ENCODE measurements at regions of chr11 and their contacts with region 1.

Region 1: DNA sequence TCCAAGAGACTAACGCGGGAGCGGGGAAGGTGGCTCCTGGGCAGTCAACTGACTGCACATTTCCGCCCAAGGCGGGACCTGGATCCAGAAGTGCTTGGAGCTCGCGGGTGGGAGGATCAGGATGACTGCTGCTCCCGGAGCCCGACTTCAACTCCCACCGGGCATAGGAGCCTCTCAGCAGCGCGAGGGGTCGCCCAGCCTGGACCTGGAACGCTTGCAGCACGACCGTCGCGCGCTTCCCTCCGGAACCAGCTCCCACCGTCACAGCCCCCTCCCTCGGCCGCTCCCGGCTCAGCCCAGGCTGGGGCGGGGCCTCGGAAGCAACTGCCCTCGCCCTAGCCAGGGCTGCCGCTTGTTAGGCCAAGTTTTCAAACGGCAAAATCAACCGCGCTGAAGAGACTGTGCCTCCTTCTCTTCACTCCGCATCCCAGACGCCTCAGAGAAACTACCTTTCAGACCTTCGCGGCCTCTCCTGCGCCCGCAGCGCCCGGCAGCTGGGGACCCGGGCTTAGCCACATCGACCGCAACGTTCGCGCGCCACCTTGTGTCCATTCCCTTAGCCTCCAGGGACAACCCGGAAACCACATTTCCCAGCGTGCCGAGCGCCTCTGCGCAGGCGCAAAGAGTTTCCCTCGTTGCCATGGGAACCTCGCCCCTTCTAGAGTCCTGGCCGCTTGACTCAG is 14.0 kb downstream of the SSH3 start:
- DNase-seq: peak; percentile 98 to 99
- ATAC-seq: peak; percentile 88 to 94 (median 90)
- H3K4me3 ChIP-seq: peak overlapping the region; percentile 61
- H3K4me3 Mint-ChIP-seq: peak overlapping the region; percentile 100
- H3K27ac ChIP-seq: peak overlapping the region; percentile 68
- H3K27ac Mint-ChIP-seq: peak overlapping the region; percentile 94 to 97
- H3K4me1 ChIP-seq: peaks cover 32% of the 10 kb centered on the region
- H3K4me1 Mint-ChIP-seq: peaks cover 25 to 33% of the 10 kb centered on the region in 2 donors
- H3K27me3 ChIP-seq: no peaks in the 10 kb centered on the region
- H3K27me3 Mint-ChIP-seq: peaks cover 0 to 11% of the 10 kb centered on the region in 2 donors
- CTCF ChIP-seq: peak; percentile 78

Region 2: DNA sequence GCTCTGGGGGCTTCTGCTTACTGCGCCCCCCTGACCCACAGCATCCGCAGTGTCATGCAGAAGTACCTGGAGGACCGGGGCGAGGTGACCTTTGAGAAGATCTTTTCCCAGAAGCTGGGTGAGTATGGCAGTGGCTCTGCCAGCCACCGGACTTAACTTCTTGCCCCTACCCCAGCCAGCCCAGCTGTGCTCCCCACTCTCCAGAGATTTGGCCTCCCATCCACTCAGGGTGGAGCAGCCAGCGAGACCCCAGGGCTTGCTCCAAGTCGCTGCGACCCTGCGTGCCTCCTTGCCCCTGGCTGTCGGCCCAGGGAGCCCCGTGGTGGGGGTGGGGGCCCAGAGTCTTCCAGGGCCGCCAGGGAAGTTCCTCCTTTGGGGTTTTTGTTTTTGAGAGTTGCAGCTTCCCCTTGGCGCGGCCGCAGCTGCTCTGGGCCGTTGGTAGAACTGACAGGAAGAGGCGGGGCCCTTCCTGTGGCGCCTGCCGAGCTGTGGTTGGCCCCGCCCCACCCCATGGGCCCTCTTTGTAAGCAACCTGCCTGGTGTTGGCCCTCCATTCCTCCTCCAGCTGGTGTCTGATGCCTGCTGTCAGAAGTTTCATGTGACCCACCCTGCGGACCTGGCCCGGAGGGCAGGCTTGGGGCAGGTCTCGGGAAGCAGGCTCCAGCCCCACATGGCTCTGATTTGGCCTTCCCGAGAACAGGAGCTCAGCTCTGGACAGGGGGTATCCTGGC is 40.0 kb before region 1 on chr11:
- intact Hi-C with region 1: loop called (anchors 1 kb)
- DNase-seq: peak; percentile 84 to 97
- ATAC-seq: peak; percentile 90 to 95 (median 91)
- H3K4me3 ChIP-seq: peak overlapping the region; percentile 37
- H3K4me3 Mint-ChIP-seq: peak overlapping the region; percentile 80
- H3K27ac ChIP-seq: peak overlapping the region; percentile 95
- H3K27ac Mint-ChIP-seq: peak overlapping the region; percentile 96 to 97
- H3K4me1 ChIP-seq: peaks cover 100% of the 10 kb centered on the region
- H3K4me1 Mint-ChIP-seq: peaks cover 58 to 65% of the 10 kb centered on the region in 2 donors
- H3K27me3 ChIP-seq: no peaks in the 10 kb centered on the region
- H3K27me3 Mint-ChIP-seq: no peaks in the 10 kb centered on the region
- CTCF ChIP-seq: no peak

Region 3: GRCh38 chr11:67332081-67332691 is 14.8 kb after region 1 on chr11:
- intact Hi-C with region 1: loop called (anchors 1 kb)
- DNase-seq: no peak
- ATAC-seq: no peak
- H3K4me3 ChIP-seq: no peak overlapping the region
- H3K4me3 Mint-ChIP-seq: no peak overlapping the region
- H3K27ac ChIP-seq: no peak overlapping the region
- H3K27ac Mint-ChIP-seq: no peak overlapping the region
- H3K4me1 ChIP-seq: no peaks in the 10 kb centered on the region
- H3K4me1 Mint-ChIP-seq: no peaks in the 10 kb centered on the region
- H3K27me3 ChIP-seq: no peaks in the 10 kb centered on the region
- H3K27me3 Mint-ChIP-seq: no peaks in the 10 kb centered on the region
- CTCF ChIP-seq: no peak

Region 4: DNA sequence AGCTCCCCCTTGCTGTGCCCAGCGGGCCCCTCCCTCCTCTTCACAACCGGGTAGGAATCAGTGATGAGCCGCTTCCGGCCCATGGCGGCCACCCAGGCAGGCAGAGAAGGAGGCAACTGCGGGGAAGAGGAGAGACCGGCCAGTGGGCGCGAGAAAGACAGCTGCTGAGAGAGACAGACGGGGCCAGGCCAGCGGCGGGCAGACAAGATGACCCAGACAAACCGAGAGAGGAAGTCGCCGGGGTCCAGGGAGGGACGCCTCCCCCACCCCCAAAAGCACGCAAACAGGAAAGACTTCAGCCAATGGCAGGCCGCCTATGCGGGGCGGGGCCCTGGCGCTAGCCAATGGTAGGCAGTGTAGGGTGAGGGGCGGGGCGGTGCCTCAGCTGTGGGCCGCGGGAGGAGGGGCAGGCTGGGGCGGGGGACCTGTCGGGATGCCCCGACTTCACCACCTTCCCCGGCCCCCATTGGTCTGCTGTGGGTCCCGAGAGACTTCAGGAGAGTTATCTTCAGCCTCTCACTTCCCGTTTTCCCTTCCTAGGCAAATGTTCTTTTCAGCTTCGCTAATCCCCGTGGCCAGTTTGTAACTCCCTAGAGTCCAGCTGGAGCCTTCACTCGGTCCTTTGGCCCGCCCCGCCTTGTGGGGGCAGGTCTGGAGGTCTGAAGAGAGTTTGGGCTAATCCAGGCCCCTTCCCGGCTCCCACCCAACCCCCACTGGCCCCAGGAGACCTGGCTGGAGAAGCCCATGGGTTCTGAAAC is 36.1 kb after region 1 on chr11 and contains the start of gene POLD4:
- intact Hi-C with region 1: loop called (anchors 1 kb)
- DNase-seq: peak; percentile 95 to 96
- ATAC-seq: peak; percentile 82 to 94 (median 89)
- H3K4me3 ChIP-seq: peak within 1 kb of the TSS; percentile 73
- H3K4me3 Mint-ChIP-seq: peak within 1 kb of the TSS; percentile 97
- H3K27ac ChIP-seq: peak within 1 kb of the TSS; percentile 97
- H3K27ac Mint-ChIP-seq: peak within 1 kb of the TSS; percentile 96 to 99
- H3K4me1 ChIP-seq: peaks cover 78% of the 10 kb centered on the region
- H3K4me1 Mint-ChIP-seq: peaks cover 23 to 41% of the 10 kb centered on the region in 2 donors
- H3K27me3 ChIP-seq: no peaks in the 10 kb centered on the region
- H3K27me3 Mint-ChIP-seq: peaks cover 0 to 4% of the 10 kb centered on the region in 2 donors
- CTCF ChIP-seq: no peak
- total RNA-seq, gene POLD4: 45.8 to 63.7 (median 60.5) TPM

Region 5: DNA sequence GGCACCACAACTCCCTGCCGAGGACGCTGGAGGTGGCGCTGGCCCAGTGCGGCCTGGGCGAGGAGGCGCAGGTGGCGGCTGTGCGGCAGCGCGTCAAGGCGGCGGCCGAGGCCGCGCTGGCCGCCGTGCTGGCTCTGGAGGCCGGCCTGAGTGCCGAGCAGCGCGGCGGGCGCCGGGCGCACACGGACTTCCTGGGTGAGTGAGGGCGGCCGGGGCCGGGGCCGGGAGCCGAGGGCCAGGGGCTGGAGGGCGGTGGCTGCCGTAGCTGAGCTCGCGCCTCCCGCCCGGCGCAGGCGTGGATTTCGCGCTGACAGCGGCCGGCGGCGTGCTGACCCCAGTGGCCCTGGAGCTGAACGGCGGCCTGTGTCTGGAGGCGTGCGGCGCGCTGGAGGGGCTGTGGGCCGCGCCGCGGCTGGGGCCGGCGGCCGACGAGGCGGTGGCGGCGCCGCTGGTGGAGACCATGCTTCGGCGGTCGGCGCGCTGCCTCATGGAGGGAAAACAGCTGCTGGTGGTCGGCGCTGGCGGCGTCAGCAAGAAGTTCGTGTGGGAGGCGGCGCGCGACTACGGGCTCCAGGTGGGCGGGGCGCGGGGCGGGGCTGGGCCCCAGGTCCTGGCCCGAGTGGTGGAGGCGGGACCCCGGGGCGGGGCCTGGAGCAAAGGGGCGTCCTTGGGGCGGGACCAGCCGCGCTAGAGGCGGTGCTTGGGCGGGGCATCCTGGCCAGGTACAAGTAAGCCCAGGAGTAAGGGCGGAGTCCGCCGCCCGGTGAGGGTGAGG is 103.5 kb after region 1 on chr11:
- intact Hi-C with region 1: no loop called
- DNase-seq: peak; percentile 97 to 98
- ATAC-seq: peak; percentile 92 to 99 (median 95)
- H3K4me3 ChIP-seq: peak overlapping the region; percentile 38
- H3K4me3 Mint-ChIP-seq: peak overlapping the region; percentile 79
- H3K27ac ChIP-seq: peak overlapping the region; percentile 79
- H3K27ac Mint-ChIP-seq: peak overlapping the region; percentile 83 to 87
- H3K4me1 ChIP-seq: peaks cover 60% of the 10 kb centered on the region
- H3K4me1 Mint-ChIP-seq: peaks cover 21 to 70% of the 10 kb centered on the region in 2 donors
- H3K27me3 ChIP-seq: no peaks in the 10 kb centered on the region
- H3K27me3 Mint-ChIP-seq: no peaks in the 10 kb centered on the region
- CTCF ChIP-seq: no peak

Region 6: DNA sequence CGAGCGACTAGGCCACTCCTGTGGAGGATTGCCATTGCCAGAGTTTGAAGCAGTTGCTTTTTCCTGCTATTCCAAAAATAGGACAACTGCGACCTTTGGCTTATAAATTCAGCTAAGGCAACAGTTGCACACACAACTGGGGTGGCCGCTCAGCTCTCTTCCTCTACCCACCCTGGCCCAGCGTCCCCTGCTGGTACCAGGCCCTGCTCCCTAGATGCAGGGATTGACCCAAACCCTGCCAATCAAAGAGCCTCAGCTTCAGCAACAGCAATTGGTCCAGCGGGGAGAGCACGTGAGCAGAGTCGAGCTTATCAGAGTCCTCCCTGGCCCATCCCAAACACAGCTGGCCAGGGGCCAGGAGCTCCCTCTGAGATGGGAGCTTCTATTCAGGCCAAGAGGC is 227.9 kb after region 1 on chr11:
- intact Hi-C with region 1: no loop called
- DNase-seq: no peak
- ATAC-seq: no peak
- H3K4me3 ChIP-seq: no peak overlapping the region
- H3K4me3 Mint-ChIP-seq: no peak overlapping the region
- H3K27ac ChIP-seq: no peak overlapping the region
- H3K27ac Mint-ChIP-seq: no peak overlapping the region
- H3K4me1 ChIP-seq: no peaks in the 10 kb centered on the region
- H3K4me1 Mint-ChIP-seq: no peaks in the 10 kb centered on the region
- H3K27me3 ChIP-seq: no peaks in the 10 kb centered on the region
- H3K27me3 Mint-ChIP-seq: peaks cover 0 to 6% of the 10 kb centered on the region in 2 donors
- CTCF ChIP-seq: no peak